Activated CD4-positive, alpha-beta T cell treated with anti-CD3 and anti-CD28 coated beads, Interleukin-2, amount 10 ng/mL, durations not matched to agents 7 days and 5 days (primary cell): ENCODE measurements at regions of chr12 and their contacts with region 1.

Region 1: DNA sequence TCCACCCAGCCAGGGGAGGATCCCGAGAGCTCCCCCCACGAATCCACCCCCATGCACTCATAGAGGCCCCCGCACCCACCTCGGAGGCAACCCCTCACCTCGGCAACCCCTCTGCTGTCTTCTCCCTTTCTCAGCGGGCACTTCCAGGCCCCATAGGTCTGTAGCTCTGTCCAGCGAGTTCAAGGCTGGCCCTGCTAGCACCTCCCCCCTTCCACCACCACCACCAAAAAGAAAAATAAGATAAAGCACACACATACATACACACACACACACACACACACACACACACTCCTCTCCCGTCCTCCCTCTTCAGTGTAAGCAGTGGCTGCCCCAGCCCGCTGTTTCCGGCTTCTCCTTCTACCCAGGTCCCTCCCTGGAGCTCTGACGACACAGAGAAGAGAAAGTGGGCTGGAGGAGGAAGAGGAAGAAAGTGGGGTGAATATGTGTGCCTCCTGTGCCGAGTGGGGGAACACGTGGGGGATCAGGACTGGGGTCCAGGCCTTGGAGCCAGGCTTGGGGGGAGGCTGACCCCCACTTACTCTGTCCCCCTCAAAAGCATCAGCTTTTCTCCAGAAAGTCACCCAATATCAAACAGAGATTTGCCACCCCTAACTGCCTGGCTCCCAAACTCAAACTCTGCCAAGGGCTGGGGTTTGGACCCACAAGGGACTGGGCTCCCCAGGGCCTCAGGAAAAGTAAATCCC is at the start of gene STAT6:
- DNase-seq: peak; percentile 95
- H3K4me3 Mint-ChIP-seq: peak within 1 kb of the TSS; percentile 88
- H3K27ac Mint-ChIP-seq: peak within 1 kb of the TSS; percentile 95
- H3K4me1 Mint-ChIP-seq: peaks cover 54% of the 10 kb centered on the region
- H3K27me3 Mint-ChIP-seq: no peaks in the 10 kb centered on the region
- total RNA-seq, gene STAT6: 239 to 242 TPM

Region 2: GRCh38 chr12:56957229-56957939 is 153.8 kb before region 1 on chr12 and contains the start of gene RDH16:
- CTCF ChIA-PET with region 1: no interaction called
- POLR2A ChIA-PET with region 1: no interaction called
- DNase-seq: no peak
- H3K4me3 Mint-ChIP-seq: no peak within 1 kb of the TSS
- H3K27ac Mint-ChIP-seq: no peak within 1 kb of the TSS
- H3K4me1 Mint-ChIP-seq: no peaks in the 10 kb centered on the region
- H3K27me3 Mint-ChIP-seq: peaks cover 15% of the 10 kb centered on the region
- total RNA-seq, gene RDH16: 0.31 to 0.35 TPM

Region 3: GRCh38 chr12:57005980-57006808 is 105.0 kb before region 1 on chr12 and contains the start of gene ZBTB39:
- CTCF ChIA-PET with region 1: interaction called, 14 read pairs
- POLR2A ChIA-PET with region 1: interaction called, 4 read pairs
- DNase-seq: peak; percentile 55
- H3K4me3 Mint-ChIP-seq: peak within 1 kb of the TSS; percentile 90
- H3K27ac Mint-ChIP-seq: peak within 1 kb of the TSS; percentile 87
- H3K4me1 Mint-ChIP-seq: peaks cover 61% of the 10 kb centered on the region
- H3K27me3 Mint-ChIP-seq: no peaks in the 10 kb centered on the region
- total RNA-seq, gene ZBTB39: 8.8 to 9.5 TPM

Region 4: GRCh38 chr12:57063991-57064685 is 47.0 kb before region 1 on chr12:
- CTCF ChIA-PET with region 1: interaction called, 98 read pairs
- POLR2A ChIA-PET with region 1: interaction called, 19 read pairs
- DNase-seq: peak; percentile 78
- H3K4me3 Mint-ChIP-seq: peak overlapping the region; percentile 73
- H3K27ac Mint-ChIP-seq: peak overlapping the region; percentile 96
- H3K4me1 Mint-ChIP-seq: peaks cover 42% of the 10 kb centered on the region
- H3K27me3 Mint-ChIP-seq: no peaks in the 10 kb centered on the region

Region 5: GRCh38 chr12:57078519-57079404 is 32.4 kb before region 1 on chr12 and contains the start of gene NEMP1:
- CTCF ChIA-PET with region 1: interaction called, 98 read pairs
- POLR2A ChIA-PET with region 1: interaction called, 8 read pairs
- DNase-seq: peak; percentile 99
- H3K4me3 Mint-ChIP-seq: peak within 1 kb of the TSS; percentile 97
- H3K27ac Mint-ChIP-seq: peak within 1 kb of the TSS; percentile 99
- H3K4me1 Mint-ChIP-seq: peaks cover 28% of the 10 kb centered on the region
- H3K27me3 Mint-ChIP-seq: no peaks in the 10 kb centered on the region
- total RNA-seq, gene NEMP1: 50.2 to 54.3 TPM

Region 6: DNA sequence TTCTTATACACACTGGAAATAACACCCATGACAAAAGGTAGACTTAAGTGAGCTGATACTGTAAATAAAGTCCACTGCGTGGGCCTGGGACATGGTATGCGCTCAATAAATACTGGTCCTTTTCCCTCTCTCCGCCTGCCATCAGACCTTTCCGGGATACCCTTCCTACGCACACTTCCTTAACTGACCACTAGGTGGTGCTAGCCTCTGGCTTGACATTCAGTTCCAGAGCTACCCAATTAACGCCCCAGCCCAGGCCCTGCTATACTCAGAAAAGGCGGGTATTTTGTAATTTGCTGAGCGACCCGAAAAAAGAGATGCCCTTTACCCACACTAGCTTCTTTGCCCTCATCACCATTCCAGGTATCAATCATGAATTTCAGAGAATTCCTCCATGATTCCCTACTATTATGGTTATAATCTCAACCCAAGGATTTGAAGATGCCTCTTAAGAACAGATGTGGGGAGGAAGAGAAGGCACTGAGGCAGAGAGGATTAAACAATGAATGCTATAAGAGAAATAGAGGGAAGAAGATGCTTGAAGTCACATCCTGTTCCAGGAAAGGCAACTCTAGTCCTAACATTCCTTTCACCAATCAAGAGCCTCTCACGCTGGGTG is 13.2 kb after region 1 on chr12:
- CTCF ChIA-PET with region 1: interaction called, 72 read pairs
- POLR2A ChIA-PET with region 1: interaction called, 4 read pairs
- DNase-seq: peak; percentile 85
- H3K4me3 Mint-ChIP-seq: no peak overlapping the region
- H3K27ac Mint-ChIP-seq: no peak overlapping the region
- H3K4me1 Mint-ChIP-seq: peaks cover 11% of the 10 kb centered on the region
- H3K27me3 Mint-ChIP-seq: peaks cover 33% of the 10 kb centered on the region

Region 7: GRCh38 chr12:57162160-57163125 is 51.3 kb after region 1 on chr12:
- CTCF ChIA-PET with region 1: no interaction called
- POLR2A ChIA-PET with region 1: no interaction called
- DNase-seq: no peak
- H3K4me3 Mint-ChIP-seq: no peak overlapping the region
- H3K27ac Mint-ChIP-seq: no peak overlapping the region
- H3K4me1 Mint-ChIP-seq: peaks cover 9% of the 10 kb centered on the region
- H3K27me3 Mint-ChIP-seq: no peaks in the 10 kb centered on the region